PC-3 (cell line): ENCODE measurements at regions of chr18 and their contacts with region 1.

Region 1: GRCh38 chr18:58781627-58782194 is 83.0 kb upstream of the ZNF532 start:
- DNase-seq: peak; percentile 90
- ATAC-seq: peak; percentile 32
- H3K4me3 ChIP-seq: no peak overlapping the region
- H3K27ac ChIP-seq: peak overlapping the region; percentile 44
- H3K4me1 ChIP-seq: peaks cover 28% of the 10 kb centered on the region
- H3K27me3 ChIP-seq: no peaks in the 10 kb centered on the region
- CTCF ChIP-seq: peak; percentile 96

Region 2: DNA sequence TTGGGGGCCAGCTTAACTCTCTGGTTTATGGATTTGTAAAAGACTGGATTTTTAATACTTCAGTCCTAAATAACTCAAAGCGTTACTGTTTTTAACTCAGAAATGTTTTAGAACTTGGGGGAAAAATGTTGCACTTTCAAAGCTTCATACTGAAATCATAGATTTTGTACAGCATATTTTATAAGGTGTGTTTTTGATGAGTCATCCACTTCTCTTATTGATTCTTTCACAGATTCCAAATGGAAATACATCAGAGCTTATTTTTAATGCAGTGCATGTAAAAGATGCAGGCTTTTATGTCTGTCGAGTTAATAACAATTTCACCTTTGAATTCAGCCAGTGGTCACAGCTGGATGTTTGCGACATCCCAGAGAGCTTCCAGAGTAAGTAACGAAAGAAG is 81.5 kb before region 1 on chr18:
- CTCF ChIA-PET with region 1: no interaction called
- POLR2A ChIA-PET with region 1: no interaction called
- intact Hi-C with region 1: no loop called
- DNase-seq: peak; percentile 19
- ATAC-seq: no peak
- H3K4me3 ChIP-seq: no peak overlapping the region
- H3K27ac ChIP-seq: no peak overlapping the region
- H3K4me1 ChIP-seq: no peaks in the 10 kb centered on the region; the same call in 1 of the 2 replicates
- H3K27me3 ChIP-seq: no peaks in the 10 kb centered on the region
- CTCF ChIP-seq: no peak

Region 3: GRCh38 chr18:58864146-58865032 is 82.7 kb after region 1 on chr18 and contains the start of gene ZNF532:
- CTCF ChIA-PET with region 1: no interaction called
- POLR2A ChIA-PET with region 1: interaction called, 4 read pairs
- intact Hi-C with region 1: loop called (anchors 1 kb)
- DNase-seq: peak; percentile 68
- ATAC-seq: peak; percentile 53
- H3K4me3 ChIP-seq: peak within 1 kb of the TSS; percentile 62
- H3K27ac ChIP-seq: peak within 1 kb of the TSS; percentile 87
- H3K4me1 ChIP-seq: peaks cover 71% of the 10 kb centered on the region
- H3K27me3 ChIP-seq: no peaks in the 10 kb centered on the region
- CTCF ChIP-seq: no peak
- total RNA-seq, gene ZNF532: 47.3 and 62.6 TPM in 2 replicates

Region 4: GRCh38 chr18:58896268-58896667 is 114.6 kb after region 1 on chr18:
- CTCF ChIA-PET with region 1: no interaction called
- POLR2A ChIA-PET with region 1: no interaction called
- intact Hi-C with region 1: loop called (anchors 10 kb)
- DNase-seq: no peak
- ATAC-seq: no peak
- H3K4me3 ChIP-seq: no peak overlapping the region
- H3K27ac ChIP-seq: no peak overlapping the region
- H3K4me1 ChIP-seq: peaks cover 27% of the 10 kb centered on the region
- H3K27me3 ChIP-seq: no peaks in the 10 kb centered on the region
- CTCF ChIP-seq: no peak

Region 5: GRCh38 chr18:58947136-58947732 is 165.5 kb after region 1 on chr18:
- CTCF ChIA-PET with region 1: no interaction called
- POLR2A ChIA-PET with region 1: no interaction called
- intact Hi-C with region 1: loop called (anchors 5 kb)
- DNase-seq: no peak
- ATAC-seq: no peak
- H3K4me3 ChIP-seq: no peak overlapping the region
- H3K27ac ChIP-seq: no peak overlapping the region
- H3K4me1 ChIP-seq: peaks cover 7% of the 10 kb centered on the region
- H3K27me3 ChIP-seq: no peaks in the 10 kb centered on the region
- CTCF ChIP-seq: no peak

Region 6: DNA sequence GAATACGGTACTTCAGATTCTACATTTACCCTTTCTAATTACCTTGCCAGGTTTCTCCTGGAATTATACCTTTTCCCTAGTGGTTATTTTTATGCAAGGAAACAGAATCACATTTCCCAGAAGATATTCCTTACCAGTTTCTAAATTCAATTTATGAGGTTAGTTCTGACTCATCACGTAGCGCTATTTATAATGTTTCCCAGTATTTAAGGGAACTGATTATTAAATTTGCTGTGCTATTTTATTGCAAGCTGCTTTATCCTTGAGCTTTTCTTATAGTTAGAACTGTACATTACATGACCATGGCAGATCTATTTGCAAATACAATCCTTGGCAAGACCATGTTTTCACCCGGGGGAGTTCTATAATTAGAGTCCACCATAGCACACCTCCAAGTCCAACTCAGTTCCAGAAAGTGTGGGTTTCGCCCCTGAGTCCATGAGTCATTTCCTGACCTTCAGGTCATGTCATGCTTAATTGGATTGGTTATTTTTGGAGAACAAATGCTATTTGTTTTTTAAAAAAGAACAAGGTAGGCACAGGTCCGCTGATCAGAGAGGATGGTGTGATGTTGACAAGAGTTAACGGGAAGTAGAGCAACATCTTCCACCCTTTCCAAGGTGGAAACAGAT is 209.6 kb after region 1 on chr18:
- CTCF ChIA-PET with region 1: no interaction called
- POLR2A ChIA-PET with region 1: interaction called, 3 read pairs
- intact Hi-C with region 1: loop called (anchors 5 kb)
- DNase-seq: peak; percentile 65
- ATAC-seq: peak; percentile 68
- H3K4me3 ChIP-seq: peak overlapping the region; percentile 22; the same call in 1 of the 2 replicates
- H3K27ac ChIP-seq: peak overlapping the region; percentile 92
- H3K4me1 ChIP-seq: peaks cover 43% of the 10 kb centered on the region
- H3K27me3 ChIP-seq: no peaks in the 10 kb centered on the region
- CTCF ChIP-seq: no peak; the same call in 1 of the 2 replicates

Region 7: DNA sequence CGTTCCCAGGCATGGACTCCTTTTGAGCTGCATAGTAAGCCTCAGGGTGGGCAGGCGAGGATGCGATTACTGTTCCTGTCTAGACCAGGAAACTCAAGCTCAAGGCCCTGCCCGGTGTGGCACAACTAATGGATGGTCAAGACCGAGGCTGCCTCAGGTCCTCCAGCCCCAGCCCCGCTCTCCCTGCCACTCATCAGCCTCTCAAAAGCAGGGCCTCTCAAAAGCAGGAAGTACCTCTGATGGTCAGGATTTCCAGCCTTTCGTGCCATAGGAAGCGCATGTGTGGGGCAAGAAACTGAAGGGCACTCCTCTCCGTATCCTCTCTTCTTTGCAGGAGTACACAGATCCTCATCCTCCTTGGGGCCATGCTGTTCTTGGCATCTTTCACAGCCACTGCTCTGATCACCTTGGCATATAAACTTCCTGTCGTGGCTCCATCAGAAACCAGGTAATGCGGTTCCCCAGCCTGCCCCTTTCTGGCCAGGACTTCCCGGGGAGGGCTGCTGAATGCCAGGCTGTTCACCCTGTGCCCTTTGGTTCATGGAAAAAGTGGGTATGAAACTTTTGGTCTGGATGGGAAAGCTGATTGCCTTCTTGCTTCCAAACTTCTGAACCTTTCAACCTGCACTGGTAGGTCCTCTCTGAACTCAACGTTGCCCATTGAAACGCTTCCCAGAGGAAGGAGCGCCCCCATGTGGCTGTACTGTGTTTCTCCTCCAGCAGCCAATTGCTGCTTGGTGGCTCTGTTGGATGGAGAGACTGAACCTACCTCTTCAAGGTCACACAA is 275.2 kb after region 1 on chr18:
- CTCF ChIA-PET with region 1: interaction called, 10 read pairs
- POLR2A ChIA-PET with region 1: no interaction called
- intact Hi-C with region 1: loop called (anchors 1 kb)
- DNase-seq: peak; percentile 77
- ATAC-seq: peak; percentile 45
- H3K4me3 ChIP-seq: no peak overlapping the region
- H3K27ac ChIP-seq: no peak overlapping the region
- H3K4me1 ChIP-seq: peaks cover 49% of the 10 kb centered on the region
- H3K27me3 ChIP-seq: no peaks in the 10 kb centered on the region
- CTCF ChIP-seq: peak; percentile 89